ENCODE measurements at regions of chr15 and their contacts with region 1.

Region 1: GRCh38 chr15:65249641-65250040 is 37.0 kb downstream of the PARP16 start:
- DNase-seq: peak; percentile 94
- ATAC-seq: peak; percentile 99
- H3K4me3 Mint-ChIP-seq: no peak overlapping the region
- H3K27ac Mint-ChIP-seq: peak overlapping the region; percentile 84
- H3K4me1 Mint-ChIP-seq: peaks cover 20% of the 10 kb centered on the region
- H3K27me3 Mint-ChIP-seq: no peaks in the 10 kb centered on the region
- CTCF ChIP-seq: no peak

Region 2: GRCh38 chr15:65212097-65212496 is 37.5 kb before region 1 on chr15:
- CTCF ChIA-PET with region 1: interaction called, 10 read pairs
- POLR2A ChIA-PET with region 1: no interaction called
- intact Hi-C with region 1: no loop called
- DNase-seq: peak; percentile 84
- ATAC-seq: peak; percentile 96
- H3K4me3 Mint-ChIP-seq: no peak overlapping the region
- H3K27ac Mint-ChIP-seq: no peak overlapping the region
- H3K4me1 Mint-ChIP-seq: peaks cover 5% of the 10 kb centered on the region
- H3K27me3 Mint-ChIP-seq: no peaks in the 10 kb centered on the region
- CTCF ChIP-seq: peak; percentile 61

Region 3: GRCh38 chr15:65512807-65513416 is 263.3 kb after region 1 on chr15:
- CTCF ChIA-PET with region 1: no interaction called
- POLR2A ChIA-PET with region 1: no interaction called
- intact Hi-C with region 1: no loop called
- DNase-seq: no peak
- ATAC-seq: no peak
- H3K4me3 Mint-ChIP-seq: no peak overlapping the region
- H3K27ac Mint-ChIP-seq: peak overlapping the region; percentile 54
- H3K4me1 Mint-ChIP-seq: peaks cover 49% of the 10 kb centered on the region
- H3K27me3 Mint-ChIP-seq: no peaks in the 10 kb centered on the region
- CTCF ChIP-seq: no peak

Measured in activated CD8-positive, alpha-beta T cell treated with anti-CD3 and anti-CD28 coated beads for 36 hours (primary cell).